HAP-1 (cell line): ENCODE measurements at regions of chrX and their contacts with region 1.

Region 1: GRCh38 chrX:12080265-12080664 is 58.0 kb upstream of the FRMPD4 start:
- DNase-seq: peak; percentile 27 to 58
- H3K4me3 ChIP-seq: no peak overlapping the region
- H3K4me1 ChIP-seq: no peaks in the 10 kb centered on the region
- H3K27me3 ChIP-seq: 0 out of 2 replicates have a peak, but pooled peaks cover 2% of the 10 kb centered on the region

Region 2: DNA sequence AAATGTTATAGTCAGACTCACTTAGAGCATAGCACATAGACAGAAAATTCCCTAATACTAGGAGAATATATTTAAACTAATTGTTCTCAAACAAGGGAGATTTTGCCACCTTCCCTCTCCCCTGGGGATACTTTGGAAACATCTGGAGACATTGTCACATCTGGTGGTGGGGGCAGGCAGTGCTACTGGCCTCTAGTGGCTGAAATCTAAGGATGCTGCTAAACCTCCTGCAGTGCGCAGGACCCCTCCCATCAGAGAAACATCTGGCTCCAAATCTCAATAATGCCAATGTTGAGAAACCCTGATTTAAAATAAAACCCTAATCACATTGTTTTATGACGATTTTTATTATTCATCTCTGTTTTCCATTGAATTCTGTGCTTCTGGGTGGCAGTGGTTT is 302.9 kb after region 1 on chrX:
- in situ Hi-C with region 1: no loop called
- DNase-seq: peak in 1 of 2 experiments; percentile 17
- H3K4me3 ChIP-seq: no peak overlapping the region
- H3K4me1 ChIP-seq: peaks cover 9% of the 10 kb centered on the region
- H3K27me3 ChIP-seq: no peaks in the 10 kb centered on the region

Region 3: DNA sequence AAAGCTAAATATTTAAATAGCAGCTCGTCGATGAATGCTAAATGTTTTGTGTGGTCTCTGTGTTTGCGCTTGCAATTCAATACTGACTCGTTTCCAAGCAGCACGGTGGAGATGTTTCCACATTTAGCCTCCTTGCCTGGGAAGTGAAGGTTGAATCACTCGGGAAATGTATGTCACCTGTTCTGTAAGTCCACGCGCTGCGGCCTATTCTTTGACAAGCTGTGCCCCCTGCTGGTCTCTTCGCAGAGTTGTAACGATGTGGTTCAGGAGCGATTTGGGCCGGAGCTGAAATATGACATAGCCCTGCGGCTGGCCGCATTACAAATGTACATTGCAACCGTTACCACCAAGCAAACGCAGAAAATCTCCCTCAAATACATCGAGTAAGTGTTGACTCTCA is 621.4 kb after region 1 on chrX:
- in situ Hi-C with region 1: loop called (anchors 25 kb)
- DNase-seq: peak; percentile 69 to 84
- H3K4me3 ChIP-seq: no peak overlapping the region
- H3K4me1 ChIP-seq: peaks cover 14% of the 10 kb centered on the region
- H3K27me3 ChIP-seq: no peaks in the 10 kb centered on the region; the same call in 1 of the 2 replicates